A673 (cell line): ENCODE measurements at regions of chr5 and their contacts with region 1.

Region 1: GRCh38 chr5:177194274-177194673 is 60.7 kb downstream of the NSD1 start:
- DNase-seq: peak; percentile 34
- H3K4me3 ChIP-seq: no peak overlapping the region
- H3K27ac ChIP-seq: no peak overlapping the region
- H3K4me1 ChIP-seq: no peaks in the 10 kb centered on the region
- H3K27me3 ChIP-seq: no peaks in the 10 kb centered on the region
- CTCF ChIP-seq: no peak

Region 2: DNA sequence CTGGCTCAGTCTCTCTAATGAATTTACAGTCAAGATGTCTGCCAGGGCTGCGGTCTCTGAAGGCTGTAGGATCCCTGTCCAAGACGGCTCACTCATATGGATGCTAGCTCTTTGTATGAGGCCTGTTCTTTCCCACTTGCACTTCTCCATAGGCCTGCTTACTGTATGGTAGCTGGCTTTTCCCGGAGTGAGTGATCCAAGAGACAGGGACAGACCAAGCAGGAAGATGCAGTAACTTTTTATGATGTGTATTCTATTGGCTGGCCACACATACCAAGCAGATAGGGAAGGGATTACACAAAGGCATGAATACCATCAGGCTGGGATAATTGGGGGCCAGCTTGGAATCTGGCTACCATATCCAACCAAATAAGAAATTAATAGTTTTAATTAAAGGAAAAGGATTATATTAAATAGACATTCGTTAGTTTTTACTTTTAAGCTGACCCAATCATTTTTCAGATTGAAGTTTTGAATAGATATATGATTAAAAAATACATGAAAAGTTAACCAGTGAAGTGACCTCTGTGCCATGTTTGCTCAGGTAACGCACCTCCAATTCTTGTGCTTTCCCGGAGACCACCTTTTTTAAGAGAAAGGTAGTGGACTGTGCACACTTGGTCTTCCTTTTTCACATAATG is 40.2 kb before region 1 on chr5:
- CTCF ChIA-PET with region 1: no interaction called
- POLR2A ChIA-PET with region 1: no interaction called
- intact Hi-C with region 1: no loop called
- DNase-seq: no peak
- H3K4me3 ChIP-seq: no peak overlapping the region
- H3K27ac ChIP-seq: no peak overlapping the region
- H3K4me1 ChIP-seq: no peaks in the 10 kb centered on the region
- H3K27me3 ChIP-seq: no peaks in the 10 kb centered on the region
- CTCF ChIP-seq: no peak

Region 3: GRCh38 chr5:177232761-177233160 is 38.5 kb after region 1 on chr5:
- CTCF ChIA-PET with region 1: interaction called, 10 read pairs
- POLR2A ChIA-PET with region 1: no interaction called
- intact Hi-C with region 1: no loop called
- DNase-seq: no peak
- H3K4me3 ChIP-seq: no peak overlapping the region
- H3K27ac ChIP-seq: no peak overlapping the region
- H3K4me1 ChIP-seq: no peaks in the 10 kb centered on the region
- H3K27me3 ChIP-seq: no peaks in the 10 kb centered on the region
- CTCF ChIP-seq: no peak

Region 4: DNA sequence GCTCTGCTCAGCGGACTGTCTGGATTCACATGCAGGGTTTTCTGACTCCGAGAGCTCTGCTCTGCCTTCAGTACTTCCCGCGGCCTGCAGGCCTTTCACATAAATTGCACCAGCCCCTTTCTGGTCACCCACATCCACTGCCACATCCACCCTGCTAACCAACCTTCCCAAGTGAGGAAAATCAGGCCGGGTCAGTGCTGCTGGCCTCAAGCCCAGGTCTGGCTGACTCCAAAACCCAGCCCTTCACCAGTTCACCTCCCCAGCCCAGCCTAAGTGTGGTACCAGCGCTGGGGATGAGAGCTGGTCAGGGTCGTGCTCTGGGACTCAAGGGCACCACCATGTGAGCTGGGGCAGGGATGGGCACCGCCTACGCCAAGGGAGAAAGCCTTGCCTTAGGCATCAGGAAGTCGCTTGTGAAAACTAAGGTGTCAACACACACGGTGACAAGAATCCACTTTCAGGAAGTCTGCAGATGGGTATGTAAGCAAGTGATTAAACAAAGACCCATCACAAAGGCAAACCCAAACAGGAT is 144.9 kb after region 1 on chr5:
- CTCF ChIA-PET with region 1: no interaction called
- POLR2A ChIA-PET with region 1: no interaction called
- intact Hi-C with region 1: no loop called
- DNase-seq: no peak
- H3K4me3 ChIP-seq: no peak overlapping the region
- H3K27ac ChIP-seq: no peak overlapping the region
- H3K4me1 ChIP-seq: no peaks in the 10 kb centered on the region
- H3K27me3 ChIP-seq: no peaks in the 10 kb centered on the region
- CTCF ChIP-seq: no peak

Region 5: DNA sequence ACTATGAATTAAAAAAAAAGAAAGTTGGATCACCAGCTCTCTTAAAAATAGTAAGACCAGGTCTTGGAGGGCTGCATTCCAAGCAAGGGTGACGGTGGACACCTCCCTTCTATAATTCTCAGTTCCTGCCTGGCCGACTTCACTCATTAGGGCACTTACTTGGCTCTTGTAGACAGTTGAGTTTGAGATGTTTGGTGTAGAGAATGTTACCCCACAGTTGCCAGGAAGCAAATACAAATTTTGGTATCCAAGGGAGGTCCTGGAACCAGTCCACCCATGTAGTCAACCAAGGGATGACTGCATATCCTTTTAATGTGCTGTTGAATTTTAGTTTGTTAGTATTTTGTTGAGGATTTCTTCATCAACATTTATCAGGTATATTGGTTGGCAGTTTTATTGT is 426.3 kb after region 1 on chr5:
- CTCF ChIA-PET with region 1: no interaction called
- POLR2A ChIA-PET with region 1: no interaction called
- intact Hi-C with region 1: no loop called
- DNase-seq: no peak
- H3K4me3 ChIP-seq: no peak overlapping the region
- H3K27ac ChIP-seq: no peak overlapping the region
- H3K4me1 ChIP-seq: no peaks in the 10 kb centered on the region
- H3K27me3 ChIP-seq: no peaks in the 10 kb centered on the region
- CTCF ChIP-seq: no peak